Activated T-helper 1 cell treated with anti-CD3 and anti-CD28 coated beads, Interleukin-12 subunit alpha, Interleukin-12 subunit beta, Interleukin-2, Interleukin-4 antibody, amounts not matched to agents 30 ng/mL and 10 ng/mL and 1 ng/mL, durations not matched to agents 14 hours and 24 hours and 36 hours (primary cell): ENCODE measurements at regions of chr7 and their contacts with region 1.

Region 1: GRCh38 chr7:90613088-90613498 is 17.0 kb downstream of the CDK14 start:
- DNase-seq: no peak
- H3K4me3 Mint-ChIP-seq: no peak overlapping the region
- H3K27ac Mint-ChIP-seq: peak overlapping the region; percentile 69
- H3K4me1 Mint-ChIP-seq: peaks cover 17% of the 10 kb centered on the region
- H3K27me3 Mint-ChIP-seq: no peaks in the 10 kb centered on the region

Region 2: GRCh38 chr7:90596672-90597562 is 16.2 kb before region 1 on chr7:
- intact Hi-C with region 1: loop called (anchors 1 kb)
- DNase-seq: no peak
- H3K4me3 Mint-ChIP-seq: peak overlapping the region; percentile 83
- H3K27ac Mint-ChIP-seq: no peak overlapping the region
- H3K4me1 Mint-ChIP-seq: peaks cover 16% of the 10 kb centered on the region
- H3K27me3 Mint-ChIP-seq: peaks cover 66% of the 10 kb centered on the region